Ascending aorta (tissue), 2 donors: ENCODE measurements at regions of chr22 and their contacts with region 1.

Region 1: GRCh38 chr22:31661851-31662656 is at the start of gene PISD:
- DNase-seq: peak; percentile 92 to 98
- H3K4me3 ChIP-seq: peak within 1 kb of the TSS; percentile 58 to 85
- H3K27ac ChIP-seq: peak within 1 kb of the TSS; percentile 46 to 61
- H3K4me1 ChIP-seq: peaks cover 6% of the 10 kb centered on the region in 2 donors
- H3K27me3 ChIP-seq: no peaks in the 10 kb centered on the region
- CTCF ChIP-seq: no peak
- total RNA-seq, gene PISD: 110 TPM

Region 2: GRCh38 chr22:31550866-31551390 is 111.1 kb before region 1 on chr22:
- intact Hi-C with region 1: no loop called
- DNase-seq: no peak
- H3K4me3 ChIP-seq: no peak overlapping the region
- H3K27ac ChIP-seq: no peak overlapping the region
- H3K4me1 ChIP-seq: no peaks in the 10 kb centered on the region
- H3K27me3 ChIP-seq: no peaks in the 10 kb centered on the region
- CTCF ChIP-seq: no peak

Region 3: DNA sequence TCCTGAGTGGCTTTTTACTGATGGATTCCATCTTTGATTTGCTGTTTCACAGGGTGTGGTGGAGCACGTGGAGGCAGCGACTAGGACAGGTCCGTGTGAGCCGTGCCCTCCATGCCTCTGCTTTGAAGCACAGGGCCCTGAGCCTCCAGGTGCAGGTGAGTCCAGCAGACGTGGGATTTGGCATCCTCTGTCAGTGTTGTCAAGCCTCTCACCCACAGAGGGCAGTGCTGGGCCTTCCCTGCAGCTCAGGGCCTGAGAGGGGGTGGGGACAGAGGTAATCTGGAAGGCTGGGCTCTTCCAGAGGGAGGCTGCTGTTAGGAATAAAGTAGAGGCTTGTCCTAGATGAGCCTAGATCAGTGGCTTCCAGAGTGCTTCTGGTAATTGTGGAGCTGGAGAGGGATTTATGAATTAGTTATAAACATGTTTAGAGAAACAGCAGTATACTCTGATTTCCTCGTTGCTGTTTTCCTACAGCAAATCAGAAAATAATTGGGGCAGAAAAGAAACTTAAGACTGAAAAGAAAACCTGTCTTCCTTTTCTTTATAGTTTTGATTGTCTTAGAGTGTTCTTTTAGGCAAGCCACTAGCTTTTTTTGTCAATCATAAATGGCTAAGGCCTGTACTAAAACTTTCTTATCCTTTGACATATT is 100.7 kb before region 1 on chr22:
- intact Hi-C with region 1: no loop called
- DNase-seq: peak; percentile 24 to 74
- H3K4me3 ChIP-seq: no peak overlapping the region
- H3K27ac ChIP-seq: no peak overlapping the region
- H3K4me1 ChIP-seq: no peaks in the 10 kb centered on the region
- H3K27me3 ChIP-seq: no peaks in the 10 kb centered on the region
- CTCF ChIP-seq: peak; percentile 49 to 75 (median 58)

Region 4: DNA sequence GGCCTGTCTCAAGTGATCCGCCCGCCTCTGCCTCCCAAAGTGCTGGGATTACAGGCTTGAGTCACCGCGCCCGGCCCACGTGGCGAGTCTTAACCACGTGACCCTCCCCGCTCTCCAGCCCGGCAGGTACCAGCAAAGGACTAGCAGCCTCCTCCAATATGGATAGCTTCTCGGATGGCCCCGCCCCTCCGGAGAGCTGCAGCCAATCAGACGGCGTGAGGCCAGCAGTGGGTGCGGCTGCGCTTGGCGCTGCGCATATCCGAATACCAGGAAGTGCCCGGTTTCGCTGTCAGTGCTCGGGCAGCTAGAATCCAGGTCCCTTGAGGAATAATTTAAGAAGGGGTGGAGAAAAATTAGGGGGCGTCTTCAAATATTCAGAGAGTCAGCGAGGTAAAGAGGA is 14.6 kb after region 1 on chr22:
- intact Hi-C with region 1: loop called (anchors 2 kb)
- DNase-seq: peak; percentile 92 to 97
- H3K4me3 ChIP-seq: peak overlapping the region; percentile 37 to 61
- H3K27ac ChIP-seq: peak overlapping the region; percentile 59 to 80
- H3K4me1 ChIP-seq: peaks cover 4 to 19% of the 10 kb centered on the region in 2 donors
- H3K27me3 ChIP-seq: no peaks in the 10 kb centered on the region
- CTCF ChIP-seq: no peak

Region 5: DNA sequence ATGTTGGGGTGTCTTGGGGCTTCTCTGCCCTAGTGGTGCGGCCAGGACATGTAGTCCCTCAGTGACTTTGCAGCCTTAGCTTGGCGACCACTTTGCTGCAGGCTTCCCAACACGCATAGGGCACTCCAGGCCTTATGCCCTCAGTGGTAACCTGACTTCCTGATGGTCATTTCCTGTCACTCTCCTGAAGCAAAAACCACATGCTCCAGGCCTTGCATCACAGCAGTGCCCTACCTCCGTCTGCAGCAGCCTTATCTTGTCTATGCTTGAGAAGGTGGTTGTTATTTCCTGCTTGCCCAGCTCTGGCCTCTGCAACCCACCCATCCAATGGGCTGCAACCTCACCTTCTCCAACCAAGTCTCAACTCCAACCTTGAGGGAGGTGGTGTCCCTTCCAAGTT is 33.4 kb after region 1 on chr22:
- intact Hi-C with region 1: no loop called
- DNase-seq: no peak
- H3K4me3 ChIP-seq: no peak overlapping the region
- H3K27ac ChIP-seq: no peak overlapping the region
- H3K4me1 ChIP-seq: no peaks in the 10 kb centered on the region
- H3K27me3 ChIP-seq: no peaks in the 10 kb centered on the region
- CTCF ChIP-seq: no peak

Region 6: GRCh38 chr22:31943976-31944699 is 282.1 kb after region 1 on chr22 and contains the start of gene YWHAH:
- intact Hi-C with region 1: loop called (anchors 10 kb)
- DNase-seq: peak; percentile 70 to 96
- H3K4me3 ChIP-seq: peak within 1 kb of the TSS; percentile 83 to 98
- H3K27ac ChIP-seq: peak within 1 kb of the TSS; percentile 95 to 99
- H3K4me1 ChIP-seq: peaks cover 0 to 3% of the 10 kb centered on the region in 2 donors
- H3K27me3 ChIP-seq: no peaks in the 10 kb centered on the region
- CTCF ChIP-seq: peak in 1 of 3 experiments; percentile 22
- total RNA-seq, gene YWHAH: 139 TPM

Region 7: DNA sequence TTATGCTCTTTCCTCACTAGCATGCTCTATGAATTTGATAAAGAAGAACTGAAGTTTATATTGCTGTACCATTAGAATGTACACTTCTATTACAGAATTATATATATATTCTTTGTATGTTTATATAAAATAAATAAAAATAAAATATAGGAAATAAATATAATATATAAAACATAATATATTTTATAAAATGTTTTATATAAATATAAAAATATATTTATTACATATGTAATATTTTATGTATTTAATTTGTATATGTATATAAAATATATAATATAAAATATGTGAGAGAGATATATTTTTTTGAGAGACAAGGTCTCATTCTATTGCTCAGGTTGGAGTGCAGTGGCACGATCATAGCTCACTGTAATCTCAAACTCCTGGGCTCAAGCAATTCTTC is 768.3 kb after region 1 on chr22:
- intact Hi-C with region 1: no loop called
- DNase-seq: no peak
- H3K4me3 ChIP-seq: no peak overlapping the region
- H3K27ac ChIP-seq: no peak overlapping the region
- H3K4me1 ChIP-seq: no peaks in the 10 kb centered on the region
- H3K27me3 ChIP-seq: no peaks in the 10 kb centered on the region
- CTCF ChIP-seq: no peak